Naive thymus-derived CD4-positive, alpha-beta T cell (primary cell): ENCODE measurements at regions of chr13 and their contacts with region 1.

Region 1: DNA sequence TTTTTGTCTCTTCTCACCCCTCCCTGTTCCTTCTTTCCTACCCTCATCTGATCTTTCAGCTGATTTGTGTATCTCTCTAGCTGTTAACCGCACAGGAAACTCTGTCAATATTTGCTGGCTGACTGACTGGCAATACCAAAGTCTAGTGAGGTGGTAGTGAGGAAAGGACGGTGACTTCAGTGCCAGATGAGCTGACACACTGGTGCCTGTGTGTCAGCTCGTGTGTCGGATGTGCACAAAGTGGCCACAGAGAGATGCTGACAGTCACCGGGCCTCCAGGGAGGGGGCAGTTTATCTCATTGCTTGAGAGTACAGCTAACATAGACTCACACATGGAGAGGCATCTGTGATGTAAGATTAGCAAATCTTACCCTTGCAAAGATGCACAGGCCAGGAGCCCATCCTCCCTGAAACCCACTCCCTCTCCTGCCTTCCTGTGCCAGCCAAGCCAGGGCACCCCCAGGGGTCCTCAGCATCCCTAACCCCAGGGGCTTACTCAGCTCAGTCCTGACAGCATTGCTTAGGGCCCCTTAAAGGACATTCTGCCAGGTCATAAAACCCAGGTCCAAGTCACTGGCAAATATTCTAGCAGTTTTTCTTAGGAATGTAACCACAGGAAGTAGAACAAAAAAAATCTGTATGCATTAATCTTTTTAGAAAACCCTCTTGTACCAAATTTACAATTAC is 80.2 kb downstream of the SHISA2 start:
- DNase-seq: peak in 7 of 9 donors; percentile 14 to 58 (median 38)
- ATAC-seq: peak; percentile 83
- H3K4me3 ChIP-seq: no peak overlapping the region
- H3K4me3 Mint-ChIP-seq: peak overlapping the region in 9 of 10 donors; percentile 36 to 76 (median 66)
- H3K27ac ChIP-seq: peak overlapping the region; percentile 52
- H3K27ac Mint-ChIP-seq: peak overlapping the region; percentile 71 to 97 (median 84)
- H3K4me1 ChIP-seq: peaks cover 37 to 42% of the 10 kb centered on the region in 2 donors
- H3K4me1 Mint-ChIP-seq: peaks cover 33 to 77% (median 55%) of the 10 kb centered on the region in 7 donors
- H3K27me3 ChIP-seq: no peaks in the 10 kb centered on the region
- H3K27me3 Mint-ChIP-seq: no peaks in the 10 kb centered on the region

Region 2: GRCh38 chr13:25602176-25602575 is 369.4 kb before region 1 on chr13:
- CTCF ChIA-PET with region 1: no interaction called
- POLR2A ChIA-PET with region 1: no interaction called
- intact Hi-C with region 1: no loop called
- DNase-seq: no peak
- ATAC-seq: no peak
- H3K4me3 ChIP-seq: no peak overlapping the region
- H3K4me3 Mint-ChIP-seq: no peak overlapping the region
- H3K27ac ChIP-seq: no peak overlapping the region
- H3K27ac Mint-ChIP-seq: no peak overlapping the region
- H3K4me1 ChIP-seq: no peaks in the 10 kb centered on the region
- H3K4me1 Mint-ChIP-seq: no peaks in the 10 kb centered on the region
- H3K27me3 ChIP-seq: peaks cover 0 to 3% of the 10 kb centered on the region in 2 donors
- H3K27me3 Mint-ChIP-seq: peaks cover 32 to 56% (median 40%) of the 10 kb centered on the region in 5 donors

Region 3: DNA sequence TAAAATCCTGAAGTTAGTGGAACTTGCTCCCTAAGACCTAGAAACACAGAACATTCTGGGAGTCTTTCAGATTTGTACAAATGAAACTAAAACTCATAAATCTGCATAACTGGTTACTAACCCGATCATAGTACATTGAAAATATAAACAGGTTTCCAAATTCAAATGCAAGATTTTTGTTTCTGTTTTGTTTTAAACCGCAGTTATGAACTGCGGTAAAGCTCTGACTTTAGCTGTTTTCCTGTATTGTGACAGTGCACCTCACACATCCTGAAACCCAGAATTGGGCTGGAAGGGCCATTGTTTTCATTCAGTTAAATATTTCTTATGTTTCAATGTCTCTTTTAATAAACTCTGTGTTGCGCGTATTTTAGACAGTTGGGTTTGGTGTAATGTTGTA is 124.5 kb before region 1 on chr13:
- CTCF ChIA-PET with region 1: interaction called, 4 read pairs
- POLR2A ChIA-PET with region 1: no interaction called
- intact Hi-C with region 1: loop called in 1 of 2 experiments (anchors 5 kb)
- DNase-seq: peak in 7 of 9 donors; percentile 17 to 65 (median 47)
- ATAC-seq: peak; percentile 75
- H3K4me3 ChIP-seq: peak overlapping the region; percentile 38
- H3K4me3 Mint-ChIP-seq: peak overlapping the region; percentile 26 to 75 (median 66)
- H3K27ac ChIP-seq: peak overlapping the region; percentile 39
- H3K27ac Mint-ChIP-seq: peak overlapping the region; percentile 6 to 91 (median 72)
- H3K4me1 ChIP-seq: peaks cover 13 to 23% of the 10 kb centered on the region in 2 donors
- H3K4me1 Mint-ChIP-seq: peaks cover 21 to 48% (median 38%) of the 10 kb centered on the region in 7 donors
- H3K27me3 ChIP-seq: no peaks in the 10 kb centered on the region
- H3K27me3 Mint-ChIP-seq: peaks cover 0 to 3% (median 0%) of the 10 kb centered on the region in 5 donors

Region 4: GRCh38 chr13:25874907-25875306 is 96.7 kb before region 1 on chr13:
- CTCF ChIA-PET with region 1: no interaction called
- POLR2A ChIA-PET with region 1: no interaction called
- intact Hi-C with region 1: loop called (anchors 2 to 5 kb)
- DNase-seq: peak in 8 of 9 donors; percentile 24 to 84 (median 76)
- ATAC-seq: peak; percentile 90
- H3K4me3 ChIP-seq: peak overlapping the region; percentile 12
- H3K4me3 Mint-ChIP-seq: peak overlapping the region in 9 of 10 donors; percentile 14 to 71 (median 66)
- H3K27ac ChIP-seq: peak overlapping the region; percentile 55
- H3K27ac Mint-ChIP-seq: peak overlapping the region; percentile 57 to 94 (median 87)
- H3K4me1 ChIP-seq: peaks cover 15 to 44% of the 10 kb centered on the region in 2 donors
- H3K4me1 Mint-ChIP-seq: peaks cover 36 to 95% (median 79%) of the 10 kb centered on the region in 7 donors
- H3K27me3 ChIP-seq: no peaks in the 10 kb centered on the region
- H3K27me3 Mint-ChIP-seq: no peaks in the 10 kb centered on the region

Region 5: GRCh38 chr13:25958986-25959385 is 12.6 kb before region 1 on chr13:
- CTCF ChIA-PET with region 1: interaction called, 5 read pairs
- POLR2A ChIA-PET with region 1: interaction called, 17 read pairs
- intact Hi-C with region 1: loop called (anchors 1 to 2 kb)
- DNase-seq: peak in 2 of 9 donors; percentile 20 to 29
- ATAC-seq: no peak
- H3K4me3 ChIP-seq: no peak overlapping the region
- H3K4me3 Mint-ChIP-seq: peak overlapping the region in 9 of 10 donors; percentile 10 to 70 (median 56)
- H3K27ac ChIP-seq: no peak overlapping the region
- H3K27ac Mint-ChIP-seq: peak overlapping the region in 3 of 9 donors; percentile 67 to 80 (median 80)
- H3K4me1 ChIP-seq: peaks cover 4 to 29% of the 10 kb centered on the region in 2 donors
- H3K4me1 Mint-ChIP-seq: peaks cover 12 to 56% (median 37%) of the 10 kb centered on the region in 7 donors
- H3K27me3 ChIP-seq: no peaks in the 10 kb centered on the region
- H3K27me3 Mint-ChIP-seq: peaks cover 0 to 7% (median 0%) of the 10 kb centered on the region in 5 donors

Region 6: GRCh38 chr13:26011996-26012821 is 40.6 kb after region 1 on chr13:
- CTCF ChIA-PET with region 1: no interaction called
- POLR2A ChIA-PET with region 1: interaction called, 9 read pairs
- intact Hi-C with region 1: loop called (anchors 1 to 5 kb)
- DNase-seq: peak; percentile 51 to 88 (median 75)
- ATAC-seq: peak; percentile 95
- H3K4me3 ChIP-seq: peak overlapping the region; percentile 77
- H3K4me3 Mint-ChIP-seq: peak overlapping the region; percentile 81 to 89 (median 86)
- H3K27ac ChIP-seq: peak overlapping the region; percentile 90
- H3K27ac Mint-ChIP-seq: peak overlapping the region; percentile 67 to 95 (median 90)
- H3K4me1 ChIP-seq: peaks cover 0 to 8% of the 10 kb centered on the region in 2 donors
- H3K4me1 Mint-ChIP-seq: peaks cover 11 to 65% (median 48%) of the 10 kb centered on the region in 7 donors
- H3K27me3 ChIP-seq: no peaks in the 10 kb centered on the region
- H3K27me3 Mint-ChIP-seq: no peaks in the 10 kb centered on the region

Region 7: GRCh38 chr13:26017196-26017921 is 45.8 kb after region 1 on chr13:
- CTCF ChIA-PET with region 1: no interaction called
- POLR2A ChIA-PET with region 1: interaction called, 9 read pairs
- intact Hi-C with region 1: loop called (anchors 1 to 5 kb)
- DNase-seq: peak in 5 of 9 donors; percentile 24 to 53 (median 36)
- ATAC-seq: peak; percentile 58
- H3K4me3 ChIP-seq: no peak overlapping the region
- H3K4me3 Mint-ChIP-seq: peak overlapping the region in 7 of 10 donors; percentile 20 to 77 (median 40)
- H3K27ac ChIP-seq: peak overlapping the region; percentile 61
- H3K27ac Mint-ChIP-seq: peak overlapping the region in 8 of 9 donors; percentile 77 to 94 (median 82)
- H3K4me1 ChIP-seq: peaks cover 0 to 16% of the 10 kb centered on the region in 2 donors
- H3K4me1 Mint-ChIP-seq: peaks cover 10 to 79% (median 53%) of the 10 kb centered on the region in 7 donors
- H3K27me3 ChIP-seq: no peaks in the 10 kb centered on the region
- H3K27me3 Mint-ChIP-seq: no peaks in the 10 kb centered on the region

Region 8: DNA sequence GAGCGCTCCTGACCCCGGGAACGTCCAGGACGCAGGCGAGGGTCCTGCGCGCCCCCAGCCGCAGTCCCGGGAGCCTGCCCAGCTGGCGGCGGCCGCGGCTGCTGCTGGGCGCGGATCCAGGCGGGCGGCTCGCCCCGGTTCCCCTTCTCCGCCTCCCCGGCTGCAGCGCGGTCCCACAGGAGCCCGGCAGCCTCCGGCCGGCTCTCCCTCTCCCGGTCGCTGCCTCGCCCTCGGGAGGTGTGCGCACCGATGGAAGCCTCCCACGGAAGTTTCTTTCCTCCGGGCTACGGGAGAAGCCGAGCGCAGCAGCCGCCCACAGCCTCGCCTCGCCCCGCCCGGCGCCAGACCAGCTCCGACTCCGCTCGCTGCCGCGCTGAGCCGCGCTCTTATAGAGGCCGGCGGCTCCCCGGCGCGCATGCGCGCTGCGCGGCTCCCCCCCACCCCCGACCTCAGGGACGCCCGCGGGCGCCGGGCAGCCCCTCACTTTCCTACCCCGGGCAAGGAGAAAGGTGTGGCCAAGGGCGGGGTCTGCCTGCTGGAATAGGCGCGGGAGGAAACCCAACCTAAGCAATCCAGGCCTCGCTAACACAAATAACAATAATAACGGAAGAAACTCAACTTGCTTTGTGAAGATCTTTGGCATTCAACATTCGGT is 80.2 kb after region 1 on chr13 and contains the start of gene SHISA2:
- CTCF ChIA-PET with region 1: no interaction called
- POLR2A ChIA-PET with region 1: no interaction called
- intact Hi-C with region 1: loop called (anchors 2 to 5 kb)
- DNase-seq: peak; percentile 2 to 51 (median 31)
- ATAC-seq: peak; percentile 82
- H3K4me3 ChIP-seq: peak within 1 kb of the TSS; percentile 39
- H3K4me3 Mint-ChIP-seq: peak within 1 kb of the TSS; percentile 77 to 89 (median 83)
- H3K27ac ChIP-seq: peak within 1 kb of the TSS; percentile 13
- H3K27ac Mint-ChIP-seq: peak within 1 kb of the TSS in 4 of 9 donors; percentile 16 to 67 (median 60)
- H3K4me1 ChIP-seq: peaks cover 0 to 11% of the 10 kb centered on the region in 2 donors
- H3K4me1 Mint-ChIP-seq: peaks cover 0 to 37% (median 17%) of the 10 kb centered on the region in 7 donors
- H3K27me3 ChIP-seq: peaks cover 0 to 6% of the 10 kb centered on the region in 2 donors
- H3K27me3 Mint-ChIP-seq: peaks cover 0 to 71% (median 29%) of the 10 kb centered on the region in 5 donors
- total RNA-seq, gene SHISA2: 0.98 to 3.6 (median 1.6) TPM

Region 9: GRCh38 chr13:26325876-26326275 is 354.3 kb after region 1 on chr13:
- CTCF ChIA-PET with region 1: no interaction called
- POLR2A ChIA-PET with region 1: no interaction called
- intact Hi-C with region 1: no loop called
- DNase-seq: no peak
- ATAC-seq: no peak
- H3K4me3 ChIP-seq: no peak overlapping the region
- H3K4me3 Mint-ChIP-seq: no peak overlapping the region
- H3K27ac ChIP-seq: no peak overlapping the region
- H3K27ac Mint-ChIP-seq: no peak overlapping the region
- H3K4me1 ChIP-seq: no peaks in the 10 kb centered on the region
- H3K4me1 Mint-ChIP-seq: peaks cover 21 to 77% (median 63%) of the 10 kb centered on the region in 7 donors
- H3K27me3 ChIP-seq: no peaks in the 10 kb centered on the region
- H3K27me3 Mint-ChIP-seq: no peaks in the 10 kb centered on the region